Common myeloid progenitor, CD34-positive (primary cell): ENCODE measurements at regions of chr3 and their contacts with region 1.

Region 1: DNA sequence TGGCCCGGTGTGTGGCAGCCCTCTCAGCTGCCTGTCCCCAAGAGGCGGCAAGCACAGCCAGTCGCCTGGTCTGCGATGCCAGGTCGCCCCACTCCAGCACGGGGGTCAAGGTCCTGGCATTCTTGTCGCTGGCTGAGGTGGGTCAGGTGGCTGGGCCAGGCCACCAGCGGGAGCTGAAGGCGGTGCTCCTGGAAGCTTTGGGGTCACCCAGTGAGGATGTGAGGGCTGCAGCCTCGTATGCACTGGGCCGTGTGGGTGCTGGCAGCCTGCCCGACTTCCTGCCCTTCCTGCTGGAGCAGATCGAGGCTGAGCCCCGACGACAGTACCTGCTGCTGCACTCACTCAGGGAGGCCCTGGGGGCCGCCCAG is 20.8 kb downstream of the CAND2 start:
- DNase-seq: peak in 2 of 3 donors; percentile 79
- H3K4me3 ChIP-seq: peak overlapping the region in 2 of 7 experiments; percentile 11 to 13
- H3K27ac ChIP-seq: no peak overlapping the region
- H3K4me1 ChIP-seq: peaks cover 0 to 13% (median 13%) of the 10 kb centered on the region in 4 experiments
- H3K27me3 ChIP-seq: no peaks in the 10 kb centered on the region

Region 2: GRCh38 chr3:12830785-12831156 is 13.4 kb after region 1 on chr3:
- CTCF ChIA-PET with region 1: interaction called, 12 read pairs
- POLR2A ChIA-PET with region 1: no interaction called
- DNase-seq: peak in 1 of 3 donors; percentile 21
- H3K4me3 ChIP-seq: no peak overlapping the region
- H3K27ac ChIP-seq: no peak overlapping the region
- H3K4me1 ChIP-seq: no peaks in the 10 kb centered on the region
- H3K27me3 ChIP-seq: no peaks in the 10 kb centered on the region

Region 3: GRCh38 chr3:12841149-12841970 is 24.0 kb after region 1 on chr3 and contains the start of gene RPL32:
- CTCF ChIA-PET with region 1: interaction called, 19 read pairs
- POLR2A ChIA-PET with region 1: interaction called, 3 read pairs
- DNase-seq: peak; percentile 98 to 99 (median 99)
- H3K4me3 ChIP-seq: peak within 1 kb of the TSS; percentile 86 to 100 (median 92)
- H3K27ac ChIP-seq: peak within 1 kb of the TSS; percentile 99 to 100
- H3K4me1 ChIP-seq: peaks cover 4 to 31% (median 24%) of the 10 kb centered on the region in 4 experiments
- H3K27me3 ChIP-seq: no peaks in the 10 kb centered on the region

Region 4: GRCh38 chr3:12853191-12853741 is 35.9 kb after region 1 on chr3:
- CTCF ChIA-PET with region 1: no interaction called
- POLR2A ChIA-PET with region 1: no interaction called
- DNase-seq: no peak
- H3K4me3 ChIP-seq: no peak overlapping the region
- H3K27ac ChIP-seq: no peak overlapping the region
- H3K4me1 ChIP-seq: no peaks in the 10 kb centered on the region
- H3K27me3 ChIP-seq: peaks cover 0 to 7% (median 0%) of the 10 kb centered on the region in 5 experiments